Dorsolateral prefrontal cortex (tissue), 120 donors: ENCODE measurements at regions of chr17 and their contacts with region 1.

Region 1: DNA sequence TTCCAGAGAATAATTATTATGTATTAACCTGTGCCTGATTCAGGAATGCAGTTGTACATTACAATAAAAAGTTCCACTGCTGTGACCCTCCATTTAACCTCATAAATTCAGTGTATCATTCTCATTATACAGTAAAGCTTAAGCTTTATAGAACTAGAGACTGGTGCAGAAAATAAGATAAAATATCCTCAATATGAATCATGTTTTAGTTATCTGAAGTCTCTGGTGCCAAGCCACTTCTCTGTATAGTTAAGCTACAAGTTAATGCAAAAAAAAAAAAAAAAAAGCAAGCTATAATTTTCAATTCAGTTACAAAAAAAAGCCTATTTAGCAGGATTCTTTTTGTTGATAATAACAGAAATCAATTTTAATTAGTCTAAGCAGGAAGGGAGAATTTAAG is 22.4 kb upstream of the SMIM36 start:
- DNase-seq: no peak
- H3K4me3 ChIP-seq: no peak overlapping the region
- H3K27ac ChIP-seq: no peak overlapping the region
- H3K27me3 ChIP-seq: peaks cover 0 to 5% (median 0%) of the 10 kb centered on the region in 45 donors
- CTCF ChIP-seq: no peak

Region 2: GRCh38 chr17:55513885-55514591 is 19.6 kb before region 1 on chr17:
- intact Hi-C with region 1: no loop called
- DNase-seq: peak in 7 of 10 donors; percentile 43 to 89 (median 49)
- H3K4me3 ChIP-seq: peak overlapping the region in 13 of 59 donors; percentile 3 to 39 (median 22)
- H3K27ac ChIP-seq: no peak overlapping the region
- H3K27me3 ChIP-seq: peaks cover 0 to 2% (median 0%) of the 10 kb centered on the region in 45 donors
- CTCF ChIP-seq: peak; percentile 78 to 98 (median 92)

Region 3: GRCh38 chr17:55641676-55642081 is 108.1 kb after region 1 on chr17:
- intact Hi-C with region 1: loop called in 1 of 2 experiments (anchors 5 kb)
- DNase-seq: peak in 9 of 10 donors; percentile 7 to 71 (median 46)
- H3K4me3 ChIP-seq: no peak overlapping the region
- H3K27ac ChIP-seq: no peak overlapping the region
- H3K27me3 ChIP-seq: peaks cover 0 to 20% (median 0%) of the 10 kb centered on the region in 45 donors
- CTCF ChIP-seq: peak in 53 of 56 donors; percentile 12 to 65 (median 49)